Activated T-helper 1 cell treated with anti-CD3 and anti-CD28 coated beads, Interleukin-12 subunit alpha, Interleukin-12 subunit beta, Interleukin-2, Interleukin-4 antibody, amounts not matched to agents 30 ng/mL and 10 ng/mL and 1 ng/mL, durations not matched to agents 14 hours and 24 hours and 36 hours (primary cell): ENCODE measurements at regions of chr5 and their contacts with region 1.

Region 1: DNA sequence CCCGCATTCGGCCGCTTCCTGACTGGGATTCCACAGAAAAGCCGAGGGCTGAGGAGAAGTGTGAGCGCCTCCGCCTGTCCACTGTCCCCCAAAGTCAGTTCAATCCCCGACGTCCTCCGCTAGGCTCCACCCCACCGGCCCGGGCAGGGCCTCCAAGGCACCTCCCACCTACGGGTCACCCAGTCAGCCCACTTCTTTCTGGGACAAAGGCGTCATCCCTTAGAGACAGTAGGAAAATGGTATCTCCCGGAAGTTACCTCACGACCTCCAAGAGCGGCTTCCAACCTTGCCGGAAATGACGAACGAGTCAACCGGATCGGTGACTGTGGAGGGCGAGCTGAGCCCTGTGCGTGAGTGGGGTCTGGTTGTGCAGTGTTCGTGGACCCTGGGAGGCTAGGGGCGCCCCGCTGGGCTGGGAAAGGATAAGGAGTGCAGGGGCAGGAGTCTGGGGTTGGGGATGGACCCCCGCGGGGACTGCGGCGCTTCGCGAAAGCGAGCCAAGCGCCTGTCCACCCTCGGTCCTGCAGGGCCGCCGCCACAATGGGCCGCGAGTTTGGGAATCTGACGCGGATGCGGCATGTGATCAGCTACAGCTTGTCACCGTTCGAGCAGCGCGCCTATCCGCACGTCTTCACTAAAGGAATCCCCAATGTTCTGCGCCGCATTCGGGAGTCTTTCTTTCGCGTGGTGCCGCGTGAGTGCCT is at the starts of genes GDF9 and UQCRQ:
- DNase-seq: peak; percentile 93
- H3K4me3 Mint-ChIP-seq: peak within 1 kb of the TSS; percentile 95
- H3K27ac Mint-ChIP-seq: peak within 1 kb of the TSS; percentile 99
- H3K4me1 Mint-ChIP-seq: peaks cover 33% of the 10 kb centered on the region
- H3K27me3 Mint-ChIP-seq: no peaks in the 10 kb centered on the region
- total RNA-seq, gene GDF9: 0.32 and 0.57 TPM in 2 replicates
- total RNA-seq, gene UQCRQ: 410 and 425 TPM in 2 replicates

Region 2: GRCh38 chr5:132293066-132293991 is 573.2 kb before region 1 on chr5:
- intact Hi-C with region 1: loop called (anchors 1 kb)
- DNase-seq: peak; percentile 53
- H3K4me3 Mint-ChIP-seq: peak overlapping the region; percentile 93
- H3K27ac Mint-ChIP-seq: peak overlapping the region; percentile 75
- H3K4me1 Mint-ChIP-seq: peaks cover 30% of the 10 kb centered on the region
- H3K27me3 Mint-ChIP-seq: peaks cover 15% of the 10 kb centered on the region

Region 3: GRCh38 chr5:132495667-132496190 is 370.8 kb before region 1 on chr5:
- intact Hi-C with region 1: loop called (anchors 5 kb)
- DNase-seq: peak; percentile 72
- H3K4me3 Mint-ChIP-seq: peak overlapping the region; percentile 93
- H3K27ac Mint-ChIP-seq: peak overlapping the region; percentile 90
- H3K4me1 Mint-ChIP-seq: peaks cover 80% of the 10 kb centered on the region
- H3K27me3 Mint-ChIP-seq: peaks cover 1% of the 10 kb centered on the region

Region 4: DNA sequence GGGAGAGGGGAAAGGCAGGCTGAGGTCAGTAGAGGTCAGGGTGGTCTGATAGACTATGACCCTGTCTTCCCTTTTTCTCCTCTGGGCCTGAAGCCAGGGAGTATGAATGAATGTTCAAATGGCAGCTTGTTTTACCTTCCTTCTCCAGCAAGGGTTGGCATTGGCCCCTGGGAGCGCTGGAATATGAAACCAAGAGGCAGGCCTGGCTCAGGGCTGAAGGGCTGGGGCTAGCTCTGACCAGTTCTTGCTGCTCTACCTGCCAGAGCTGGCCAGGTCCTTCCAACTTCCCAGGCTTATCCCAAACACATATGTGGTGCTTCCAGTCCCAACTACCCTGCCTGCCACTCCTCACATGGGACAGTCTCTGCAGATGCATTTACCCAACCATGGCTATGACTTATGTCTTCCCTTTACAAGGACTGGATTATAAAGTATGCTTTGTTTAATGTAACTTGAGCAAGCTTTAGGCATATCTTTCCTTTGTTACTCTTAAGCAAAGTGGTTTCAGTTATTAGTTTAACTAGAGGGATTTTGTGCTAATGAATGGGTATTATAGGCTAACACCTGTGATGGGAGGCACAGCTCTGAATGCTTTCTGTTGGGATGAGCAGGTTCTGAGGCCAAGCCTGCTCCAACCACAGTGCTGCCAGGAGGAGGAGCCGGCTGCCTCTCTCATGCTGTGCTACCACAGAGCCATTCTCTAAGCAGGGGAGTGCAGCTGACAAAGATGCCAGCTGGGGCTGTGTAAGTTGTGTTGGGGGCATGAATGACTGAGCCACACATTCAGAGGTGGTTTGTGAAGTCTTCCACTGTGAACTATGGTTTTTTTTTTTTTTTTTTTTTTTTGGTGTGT is 113.1 kb before region 1 on chr5:
- intact Hi-C with region 1: loop called (anchors 2 kb)
- DNase-seq: no peak
- H3K4me3 Mint-ChIP-seq: peak overlapping the region; percentile 35
- H3K27ac Mint-ChIP-seq: peak overlapping the region; percentile 90
- H3K4me1 Mint-ChIP-seq: peaks cover 72% of the 10 kb centered on the region
- H3K27me3 Mint-ChIP-seq: peaks cover 3% of the 10 kb centered on the region

Region 5: GRCh38 chr5:132807163-132807838 is 59.2 kb before region 1 on chr5:
- intact Hi-C with region 1: no loop called
- DNase-seq: no peak
- H3K4me3 Mint-ChIP-seq: no peak overlapping the region
- H3K27ac Mint-ChIP-seq: no peak overlapping the region
- H3K4me1 Mint-ChIP-seq: peaks cover 4% of the 10 kb centered on the region
- H3K27me3 Mint-ChIP-seq: peaks cover 66% of the 10 kb centered on the region

Region 6: GRCh38 chr5:132963175-132964104 is 96.9 kb after region 1 on chr5 and contains the start of gene AFF4:
- intact Hi-C with region 1: loop called (anchors 1 kb)
- DNase-seq: peak; percentile 85
- H3K4me3 Mint-ChIP-seq: peak within 1 kb of the TSS; percentile 93
- H3K27ac Mint-ChIP-seq: peak within 1 kb of the TSS; percentile 96
- H3K4me1 Mint-ChIP-seq: peaks cover 17% of the 10 kb centered on the region
- H3K27me3 Mint-ChIP-seq: peaks cover 3% of the 10 kb centered on the region
- total RNA-seq, gene AFF4: 38.3 and 40.9 TPM in 2 replicates

Region 7: GRCh38 chr5:133336121-133336968 is 469.9 kb after region 1 on chr5:
- intact Hi-C with region 1: no loop called
- DNase-seq: no peak
- H3K4me3 Mint-ChIP-seq: no peak overlapping the region
- H3K27ac Mint-ChIP-seq: peak overlapping the region; percentile 21
- H3K4me1 Mint-ChIP-seq: peaks cover 36% of the 10 kb centered on the region
- H3K27me3 Mint-ChIP-seq: no peaks in the 10 kb centered on the region